ENCODE measurements at regions of chr10 and their contacts with region 1.

Region 1: GRCh38 chr10:12264204-12264940 is 68.4 kb downstream of the CDC123 start:
- DNase-seq: peak; percentile 68 to 82
- ATAC-seq: peak; percentile 80 to 96 (median 92)
- H3K4me3 ChIP-seq: peak overlapping the region in 8 of 10 donors; percentile 14 to 51 (median 42)
- H3K27ac ChIP-seq: peak overlapping the region in 3 of 10 donors; percentile 1 to 70 (median 61)
- H3K4me1 ChIP-seq: peaks cover 0 to 32% (median 0%) of the 10 kb centered on the region in 9 donors
- H3K27me3 ChIP-seq: no peaks in the 10 kb centered on the region
- CTCF ChIP-seq: peak; percentile 79 to 95 (median 92)

Region 2: GRCh38 chr10:10782603-10783002 is 1481.8 kb before region 1 on chr10:
- intact Hi-C with region 1: no loop called
- DNase-seq: no peak
- ATAC-seq: no peak
- H3K4me3 ChIP-seq: no peak overlapping the region
- H3K27ac ChIP-seq: no peak overlapping the region
- H3K4me1 ChIP-seq: peaks cover 0 to 13% (median 0%) of the 10 kb centered on the region in 9 donors
- H3K27me3 ChIP-seq: no peaks in the 10 kb centered on the region
- CTCF ChIP-seq: no peak

Region 3: GRCh38 chr10:12308736-12309375 is 44.5 kb after region 1 on chr10:
- intact Hi-C with region 1: no loop called
- DNase-seq: no peak
- ATAC-seq: no peak
- H3K4me3 ChIP-seq: no peak overlapping the region
- H3K27ac ChIP-seq: no peak overlapping the region
- H3K4me1 ChIP-seq: no peaks in the 10 kb centered on the region
- H3K27me3 ChIP-seq: peaks cover 0 to 3% (median 0%) of the 10 kb centered on the region in 7 donors
- CTCF ChIP-seq: no peak

Region 4: GRCh38 chr10:12484941-12485805 is 220.8 kb after region 1 on chr10:
- intact Hi-C with region 1: loop called in 1 of 10 experiments (anchors 10 kb)
- DNase-seq: peak; percentile 36 to 55
- ATAC-seq: peak; percentile 78 to 92 (median 89)
- H3K4me3 ChIP-seq: peak overlapping the region in 6 of 10 donors; percentile 6 to 29 (median 25)
- H3K27ac ChIP-seq: peak overlapping the region in 8 of 10 donors; percentile 9 to 78 (median 51)
- H3K4me1 ChIP-seq: peaks cover 0 to 27% (median 12%) of the 10 kb centered on the region in 9 donors
- H3K27me3 ChIP-seq: no peaks in the 10 kb centered on the region
- CTCF ChIP-seq: peak in 3 of 9 donors; percentile 13 to 22 (median 22)

Region 5: GRCh38 chr10:12656518-12657142 is 392.3 kb after region 1 on chr10:
- intact Hi-C with region 1: loop called in 8 of 10 experiments (anchors 2 to 5 kb)
- DNase-seq: no peak
- ATAC-seq: peak in 3 of 8 donors; percentile 34 to 55 (median 35)
- H3K4me3 ChIP-seq: no peak overlapping the region
- H3K27ac ChIP-seq: no peak overlapping the region
- H3K4me1 ChIP-seq: no peaks in the 10 kb centered on the region
- H3K27me3 ChIP-seq: no peaks in the 10 kb centered on the region
- CTCF ChIP-seq: peak; percentile 33 to 76 (median 71)

Region 6: GRCh38 chr10:12902135-12902572 is 637.8 kb after region 1 on chr10:
- intact Hi-C with region 1: loop called in 5 of 10 experiments (anchors 5 to 10 kb)
- DNase-seq: peak in 1 of 2 donors; percentile 62
- ATAC-seq: peak in 3 of 8 donors; percentile 33 to 46 (median 34)
- H3K4me3 ChIP-seq: no peak overlapping the region
- H3K27ac ChIP-seq: no peak overlapping the region
- H3K4me1 ChIP-seq: peaks cover 0 to 9% (median 0%) of the 10 kb centered on the region in 9 donors
- H3K27me3 ChIP-seq: peaks cover 0 to 11% (median 0%) of the 10 kb centered on the region in 7 donors
- CTCF ChIP-seq: peak; percentile 54 to 88 (median 78)

Region 7: DNA sequence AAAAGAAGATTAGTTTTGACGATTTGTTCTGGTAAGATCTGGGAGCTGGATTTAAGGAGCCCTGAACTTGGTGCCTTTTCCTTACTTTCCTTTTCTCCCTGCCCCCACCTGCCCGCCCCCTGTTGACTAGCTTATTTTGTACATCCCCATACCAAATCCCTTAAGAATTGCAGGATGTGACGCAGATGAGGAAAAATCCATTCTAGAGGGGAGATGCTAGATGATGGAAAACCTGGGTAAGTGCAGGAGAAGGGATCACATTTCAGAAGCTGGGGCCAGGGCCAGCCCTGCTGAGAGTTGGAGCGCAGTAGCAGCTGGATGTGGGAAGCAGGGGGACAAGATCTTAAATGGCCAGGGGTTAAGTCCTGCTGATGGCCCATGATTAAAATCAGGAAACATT is 643.3 kb after region 1 on chr10:
- intact Hi-C with region 1: loop called in 5 of 10 experiments (anchors 5 to 10 kb)
- DNase-seq: peak in 1 of 2 donors; percentile 22
- ATAC-seq: peak in 6 of 8 donors; percentile 23 to 72 (median 42)
- H3K4me3 ChIP-seq: no peak overlapping the region
- H3K27ac ChIP-seq: peak overlapping the region in 3 of 10 donors; percentile 31 to 44 (median 39)
- H3K4me1 ChIP-seq: peaks cover 0 to 9% (median 0%) of the 10 kb centered on the region in 9 donors
- H3K27me3 ChIP-seq: peaks cover 0 to 9% (median 0%) of the 10 kb centered on the region in 7 donors
- CTCF ChIP-seq: no peak

Region 8: GRCh38 chr10:13074561-13075451 is 810.4 kb after region 1 on chr10:
- intact Hi-C with region 1: loop called in 4 of 10 experiments (anchors 5 to 10 kb)
- DNase-seq: peak; percentile 52 to 63
- ATAC-seq: peak in 6 of 8 donors; percentile 49 to 85 (median 77)
- H3K4me3 ChIP-seq: no peak overlapping the region
- H3K27ac ChIP-seq: no peak overlapping the region
- H3K4me1 ChIP-seq: peaks cover 0 to 5% (median 0%) of the 10 kb centered on the region in 9 donors
- H3K27me3 ChIP-seq: peaks cover 0 to 19% (median 11%) of the 10 kb centered on the region in 7 donors
- CTCF ChIP-seq: peak; percentile 46 to 91 (median 86)

Region 9: GRCh38 chr10:13099666-13100348 is 835.4 kb after region 1 on chr10 and contains the start of gene OPTN:
- intact Hi-C with region 1: loop called in 2 of 10 experiments (anchors 10 kb)
- DNase-seq: peak; percentile 80 to 84
- ATAC-seq: peak; percentile 89 to 95 (median 93)
- H3K4me3 ChIP-seq: peak within 1 kb of the TSS; percentile 83 to 99 (median 96)
- H3K27ac ChIP-seq: peak within 1 kb of the TSS; percentile 87 to 99 (median 97)
- H3K4me1 ChIP-seq: peaks cover 2 to 43% (median 39%) of the 10 kb centered on the region in 9 donors
- H3K27me3 ChIP-seq: no peaks in the 10 kb centered on the region
- CTCF ChIP-seq: peak; percentile 38 to 85 (median 67)
- total RNA-seq, gene OPTN: 111 to 218 (median 133) TPM

Region 10: GRCh38 chr10:13348216-13349017 is 1084.0 kb after region 1 on chr10 and contains the start of gene SEPHS1:
- intact Hi-C with region 1: no loop called
- DNase-seq: peak; percentile 68 to 74
- ATAC-seq: peak; percentile 61 to 88 (median 78)
- H3K4me3 ChIP-seq: peak within 1 kb of the TSS; percentile 64 to 95 (median 86)
- H3K27ac ChIP-seq: peak within 1 kb of the TSS; percentile 92 to 99 (median 98)
- H3K4me1 ChIP-seq: peaks cover 0 to 37% (median 34%) of the 10 kb centered on the region in 9 donors
- H3K27me3 ChIP-seq: peaks cover 0 to 27% (median 23%) of the 10 kb centered on the region in 7 donors
- CTCF ChIP-seq: peak in 3 of 9 donors; percentile 14 to 26 (median 16)
- total RNA-seq, gene SEPHS1: 26.7 to 38.9 (median 30.4) TPM

Measured in heart right ventricle (tissue), 16 donors.